Breast epithelium (tissue), 4 donors: ENCODE measurements at regions of chr2 and their contacts with region 1.

Region 1: DNA sequence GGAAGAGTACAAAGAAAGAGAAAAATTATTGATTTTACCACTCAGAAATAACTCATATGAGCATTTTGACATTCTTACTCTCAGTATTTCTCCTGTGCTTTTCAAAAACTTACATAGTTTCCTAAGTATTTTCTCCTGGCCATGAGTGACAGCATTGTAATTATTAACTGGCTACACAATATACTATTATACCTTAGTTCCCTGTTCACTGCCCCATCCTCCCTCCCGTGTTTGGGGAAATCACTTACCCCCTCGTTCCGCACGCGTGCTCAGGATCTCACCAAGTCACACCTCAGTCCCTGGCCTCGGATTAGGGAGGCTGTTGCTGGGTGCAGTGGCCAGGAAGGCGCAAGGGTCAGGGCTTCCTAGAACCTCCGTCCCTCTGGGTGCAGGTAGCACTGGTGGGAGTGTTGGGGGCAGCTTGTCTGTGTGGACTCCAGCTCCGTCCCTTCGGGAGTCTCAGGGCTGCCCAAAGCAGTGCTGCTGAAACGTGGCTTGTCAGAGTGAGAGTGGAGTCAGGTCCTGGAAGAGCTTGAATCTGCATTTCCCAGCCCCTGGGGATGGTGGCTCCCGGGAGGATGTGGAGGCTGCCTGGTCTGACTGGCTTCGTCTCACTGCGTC is 23.2 kb downstream of the ATG4B start:
- DNase-seq: no peak
- H3K4me3 ChIP-seq: no peak overlapping the region
- H3K27ac ChIP-seq: no peak overlapping the region
- H3K4me1 ChIP-seq: no peaks in the 10 kb centered on the region
- H3K27me3 ChIP-seq: no peaks in the 10 kb centered on the region
- CTCF ChIP-seq: no peak
- POLR2A ChIP-seq: no peak

Region 2: DNA sequence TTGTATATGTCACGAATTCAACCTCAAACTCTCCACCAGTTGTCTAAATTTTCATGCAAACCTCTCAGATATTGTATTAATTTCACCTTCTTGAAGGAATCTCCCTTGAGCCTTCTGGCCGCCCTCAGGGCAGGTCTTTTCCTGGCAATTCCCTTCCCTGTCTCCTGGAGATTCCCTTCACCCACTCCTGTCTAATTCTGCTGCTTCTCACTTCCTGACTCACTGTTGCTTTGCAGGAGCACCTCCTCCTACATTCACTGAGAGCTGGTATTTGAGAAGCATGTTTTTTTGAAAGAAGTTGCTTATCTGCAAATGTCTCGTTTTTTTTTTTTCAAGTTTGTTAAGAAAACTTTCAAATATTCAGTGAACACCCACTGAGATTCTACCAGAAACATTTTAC is 1440.3 kb before region 1 on chr2:
- intact Hi-C with region 1: loop called (anchors 5 kb)
- DNase-seq: peak in 1 of 2 donors; percentile 5
- H3K4me3 ChIP-seq: no peak overlapping the region
- H3K27ac ChIP-seq: no peak overlapping the region
- H3K4me1 ChIP-seq: no peaks in the 10 kb centered on the region
- H3K27me3 ChIP-seq: peaks cover 0 to 7% of the 10 kb centered on the region in 2 donors
- CTCF ChIP-seq: no peak
- POLR2A ChIP-seq: no peak

Region 3: DNA sequence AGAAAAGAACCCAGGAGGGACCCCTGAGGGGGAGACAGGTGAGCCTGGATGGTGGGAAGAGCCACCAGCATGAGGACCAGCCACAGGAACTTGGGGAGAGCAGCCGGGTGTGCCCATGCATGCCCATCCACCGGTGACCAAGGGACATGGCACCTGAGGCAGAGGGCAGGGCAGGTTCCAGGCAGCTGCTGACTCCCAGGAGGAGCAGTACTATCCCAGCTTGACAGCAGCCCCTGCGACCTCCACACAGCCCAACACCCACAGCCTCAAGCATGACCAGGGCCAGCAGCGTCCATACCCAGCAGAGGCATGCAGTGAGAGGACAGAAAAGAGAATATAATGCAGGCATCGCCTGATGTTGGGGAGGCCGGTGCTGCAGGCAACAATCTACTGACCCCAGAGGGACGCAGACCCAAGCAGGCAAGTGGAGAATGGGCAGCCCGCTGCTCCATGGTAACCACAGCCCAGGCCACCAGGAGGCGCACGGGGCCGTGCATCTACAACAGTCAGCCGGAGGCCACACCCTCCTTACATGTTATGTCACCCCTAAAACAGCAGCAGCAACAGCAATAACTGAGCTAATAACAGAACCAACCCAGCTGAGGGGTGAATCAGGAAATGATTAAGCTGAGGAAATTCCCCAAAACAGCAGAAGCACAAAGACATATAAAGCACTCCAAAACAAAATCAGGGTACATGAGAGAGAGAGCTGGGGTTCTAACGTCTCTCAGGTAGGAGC is 1147.0 kb before region 1 on chr2:
- intact Hi-C with region 1: no loop called
- DNase-seq: peak; percentile 39 to 55
- H3K4me3 ChIP-seq: no peak overlapping the region
- H3K27ac ChIP-seq: no peak overlapping the region
- H3K4me1 ChIP-seq: no peaks in the 10 kb centered on the region
- H3K27me3 ChIP-seq: no peaks in the 10 kb centered on the region
- CTCF ChIP-seq: peak in 2 of 3 donors; percentile 53 to 56
- POLR2A ChIP-seq: no peak

Region 4: GRCh38 chr2:241329669-241330615 is 330.8 kb before region 1 on chr2:
- intact Hi-C with region 1: no loop called
- DNase-seq: no peak
- H3K4me3 ChIP-seq: no peak overlapping the region
- H3K27ac ChIP-seq: peak overlapping the region; percentile 8 to 21
- H3K4me1 ChIP-seq: no peaks in the 10 kb centered on the region
- H3K27me3 ChIP-seq: no peaks in the 10 kb centered on the region
- CTCF ChIP-seq: no peak
- POLR2A ChIP-seq: no peak

Region 5: GRCh38 chr2:241558532-241559322 is 102.0 kb before region 1 on chr2 and contains the start of gene BOK:
- intact Hi-C with region 1: no loop called
- DNase-seq: peak in 1 of 2 donors; percentile 36
- H3K4me3 ChIP-seq: peak within 1 kb of the TSS; percentile 60 to 80 (median 72)
- H3K27ac ChIP-seq: peak within 1 kb of the TSS; percentile 62 to 87
- H3K4me1 ChIP-seq: peaks cover 3 to 21% of the 10 kb centered on the region in 2 donors
- H3K27me3 ChIP-seq: no peaks in the 10 kb centered on the region
- CTCF ChIP-seq: no peak
- POLR2A ChIP-seq: no peak
- total RNA-seq, gene BOK: 32.2 to 77.6 (median 40.3) TPM

Region 6: DNA sequence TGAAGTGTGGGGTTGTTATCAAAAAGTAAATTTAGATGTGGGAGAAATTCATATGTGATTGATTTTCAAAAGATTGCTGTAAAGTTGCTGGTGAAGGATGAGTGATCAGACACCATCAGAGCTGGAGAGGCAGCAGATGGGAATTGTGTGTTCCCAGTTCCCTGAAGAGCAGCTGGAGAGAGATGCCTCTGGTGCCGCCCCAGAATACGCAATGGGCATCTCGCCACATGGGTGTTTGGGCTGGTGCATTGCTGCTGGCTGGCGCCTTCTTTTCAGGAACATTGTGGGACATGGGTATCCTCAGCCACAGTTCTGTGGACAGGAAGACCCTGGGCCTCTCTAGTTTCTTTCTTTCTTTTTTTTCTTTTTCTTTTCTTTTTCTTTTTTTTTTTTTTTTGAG is 11.3 kb before region 1 on chr2:
- intact Hi-C with region 1: no loop called
- DNase-seq: no peak
- H3K4me3 ChIP-seq: no peak overlapping the region
- H3K27ac ChIP-seq: no peak overlapping the region
- H3K4me1 ChIP-seq: no peaks in the 10 kb centered on the region
- H3K27me3 ChIP-seq: no peaks in the 10 kb centered on the region
- CTCF ChIP-seq: no peak
- POLR2A ChIP-seq: no peak